Sigmoid colon (tissue), 7 donors: ENCODE measurements at regions of chr1 and their contacts with region 1.

Region 1: GRCh38 chr1:110630839-110631663 is 24.9 kb upstream of the KCNA2 start:
- DNase-seq: peak; percentile 81
- H3K4me3 ChIP-seq: no peak overlapping the region
- H3K27ac ChIP-seq: no peak overlapping the region
- H3K4me1 ChIP-seq: peaks cover 0 to 16% (median 15%) of the 10 kb centered on the region in 4 donors
- H3K27me3 ChIP-seq: peaks cover 0 to 1% (median 0%) of the 10 kb centered on the region in 3 donors
- CTCF ChIP-seq: peak; percentile 33 to 84 (median 68)
- EP300 ChIP-seq: no peak
- POLR2A ChIP-seq: no peak

Region 2: GRCh38 chr1:110766025-110766647 is 135.1 kb after region 1 on chr1:
- intact Hi-C with region 1: loop called (anchors 1 kb)
- DNase-seq: no peak
- H3K4me3 ChIP-seq: no peak overlapping the region
- H3K27ac ChIP-seq: no peak overlapping the region
- H3K4me1 ChIP-seq: no peaks in the 10 kb centered on the region
- H3K27me3 ChIP-seq: peaks cover 0 to 28% (median 5%) of the 10 kb centered on the region in 3 donors
- CTCF ChIP-seq: peak; percentile 15 to 66 (median 56)
- EP300 ChIP-seq: no peak
- POLR2A ChIP-seq: no peak

Region 3: DNA sequence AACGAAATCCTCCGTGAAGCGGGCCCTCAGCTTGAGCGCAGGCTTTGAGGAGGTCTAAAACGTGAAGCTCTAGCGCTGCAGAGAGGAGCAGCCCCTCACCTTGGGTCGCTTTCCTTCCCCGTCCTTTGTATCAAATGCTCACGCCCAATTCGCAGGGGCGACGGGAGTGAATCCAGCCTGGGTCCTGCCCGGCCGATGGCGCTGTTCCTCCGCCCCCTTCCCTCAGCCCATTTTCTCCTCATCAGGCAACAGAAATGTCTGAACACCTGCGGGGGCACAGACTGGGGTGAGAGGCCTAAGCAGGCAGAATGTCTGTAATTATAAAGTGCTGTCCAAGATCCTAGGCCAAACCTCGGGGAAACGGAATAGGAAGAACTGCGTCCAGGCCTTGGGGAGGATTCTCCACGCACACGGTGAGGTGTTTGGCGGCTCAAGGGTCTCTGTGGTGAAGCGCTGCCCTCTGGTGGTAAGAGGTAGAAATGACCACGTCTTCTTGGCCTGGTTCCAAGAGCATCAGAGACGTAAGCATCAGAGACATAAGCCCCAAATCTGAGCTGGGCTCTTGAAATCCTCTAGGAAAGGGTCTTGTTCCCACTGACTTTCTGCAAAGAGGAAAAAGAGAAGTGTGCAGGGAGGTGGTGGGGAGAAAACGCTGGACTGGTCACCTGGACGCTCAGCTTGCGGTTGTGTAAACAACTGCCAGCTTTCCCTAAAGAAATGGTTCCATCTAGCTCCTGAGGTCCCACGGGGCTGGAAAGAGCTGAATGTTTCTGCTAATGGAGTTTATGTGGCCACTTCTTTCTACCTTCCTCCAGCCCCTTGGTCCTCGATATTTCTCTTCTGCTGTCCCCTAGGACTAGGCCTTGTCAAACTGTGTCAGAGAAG is 149.8 kb after region 1 on chr1:
- intact Hi-C with region 1: loop called (anchors 5 kb)
- DNase-seq: peak; percentile 80
- H3K4me3 ChIP-seq: no peak overlapping the region
- H3K27ac ChIP-seq: no peak overlapping the region
- H3K4me1 ChIP-seq: no peaks in the 10 kb centered on the region
- H3K27me3 ChIP-seq: peaks cover 0 to 21% (median 13%) of the 10 kb centered on the region in 3 donors
- CTCF ChIP-seq: peak; percentile 28 to 75 (median 59)
- EP300 ChIP-seq: no peak
- POLR2A ChIP-seq: no peak